ENCODE measurements at regions of chr17 and their contacts with region 1.

Region 1: DNA sequence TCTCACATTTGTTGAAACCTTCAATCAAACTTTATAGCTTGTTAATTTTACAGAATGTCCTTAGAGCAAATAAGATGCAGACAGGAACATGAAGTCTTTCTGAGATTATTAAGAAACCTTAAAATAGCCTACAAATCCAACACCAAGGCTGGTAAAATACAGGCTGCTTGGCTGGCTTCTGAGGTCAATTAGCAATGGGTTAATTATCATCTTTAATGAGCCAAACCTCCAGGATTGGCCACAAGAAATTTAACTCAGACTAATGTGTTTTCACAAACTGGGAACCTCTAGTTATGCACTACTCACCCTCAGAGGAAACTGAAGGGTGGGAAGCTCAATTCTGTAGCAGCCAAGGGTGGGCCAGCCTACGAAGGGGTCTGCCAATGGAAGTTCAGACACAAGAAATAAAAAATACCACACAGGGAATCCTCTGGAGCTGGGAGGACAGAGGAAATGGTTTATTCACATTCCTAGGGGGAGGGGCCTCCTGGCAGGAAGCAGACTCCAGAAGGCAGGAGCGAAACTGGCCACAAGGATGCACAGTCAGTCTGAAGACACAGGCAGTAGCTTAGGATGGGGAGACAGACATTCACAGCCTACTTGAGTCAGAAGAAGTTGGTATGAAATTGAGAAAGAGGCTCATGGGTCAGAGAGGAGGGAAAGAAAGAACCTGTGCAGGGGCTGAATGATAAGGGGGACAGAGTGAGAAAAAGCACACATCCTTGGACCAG is 36.1 kb downstream of the HIC1 start:
- DNase-seq: no peak
- ATAC-seq: no peak
- H3K4me3 ChIP-seq: no peak overlapping the region
- H3K4me3 Mint-ChIP-seq: peak overlapping the region; percentile 91 to 99 (median 96)
- H3K27ac ChIP-seq: peak overlapping the region; percentile 69
- H3K27ac Mint-ChIP-seq: peak overlapping the region; percentile 27 to 97 (median 95)
- H3K4me1 ChIP-seq: peaks cover 28 to 30% of the 10 kb centered on the region in 2 donors
- H3K4me1 Mint-ChIP-seq: peaks cover 28 to 76% (median 53%) of the 10 kb centered on the region in 7 donors
- H3K27me3 ChIP-seq: no peaks in the 10 kb centered on the region
- H3K27me3 Mint-ChIP-seq: no peaks in the 10 kb centered on the region

Region 2: DNA sequence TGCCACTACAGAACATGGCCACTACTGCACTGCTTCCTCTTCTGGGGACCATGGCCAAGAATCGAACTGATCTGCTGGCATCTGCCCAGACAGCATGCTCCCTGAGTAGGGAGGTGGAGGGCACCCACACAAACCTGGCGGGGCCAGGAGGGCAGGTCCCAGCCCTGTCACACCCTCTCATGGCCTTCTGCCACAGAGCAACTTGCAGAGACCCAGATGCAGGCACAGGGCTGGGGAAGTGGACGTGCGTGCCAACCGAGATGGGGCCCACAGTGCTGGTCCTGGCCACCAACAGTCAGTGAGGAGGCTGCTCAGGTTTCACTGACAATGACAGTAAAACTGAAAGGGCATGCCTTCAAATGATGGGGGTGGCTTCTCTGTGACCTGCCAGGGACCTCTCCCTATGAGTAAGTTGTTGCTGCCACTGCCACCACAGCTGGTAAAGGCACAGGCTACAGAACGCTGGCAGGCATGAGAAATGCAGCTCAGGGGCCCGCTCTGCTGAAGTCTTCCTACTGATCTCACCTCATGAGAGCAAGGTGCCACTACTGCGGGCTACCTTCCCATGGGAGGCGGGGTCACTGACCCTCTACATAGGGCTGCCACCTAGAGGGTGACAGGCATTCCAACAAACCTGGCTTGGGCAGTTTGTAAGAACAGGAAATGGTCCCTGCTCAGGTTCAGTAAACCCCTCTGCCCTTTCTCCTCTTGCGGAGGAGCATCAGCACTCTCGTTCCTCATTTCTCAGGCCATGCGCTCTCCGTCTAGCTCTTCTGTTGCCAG is 20.5 kb before region 1 on chr17:
- CTCF ChIA-PET with region 1: interaction called, 3 read pairs
- POLR2A ChIA-PET with region 1: no interaction called
- intact Hi-C with region 1: loop called in 1 of 2 experiments (anchors 1 kb)
- DNase-seq: peak in 1 of 9 donors; percentile 66
- ATAC-seq: peak; percentile 49
- H3K4me3 ChIP-seq: no peak overlapping the region
- H3K4me3 Mint-ChIP-seq: peak overlapping the region in 1 of 10 donors; percentile 53
- H3K27ac ChIP-seq: no peak overlapping the region
- H3K27ac Mint-ChIP-seq: peak overlapping the region in 1 of 9 donors; percentile 87
- H3K4me1 ChIP-seq: peaks cover 0 to 28% of the 10 kb centered on the region in 2 donors
- H3K4me1 Mint-ChIP-seq: peaks cover 0 to 76% (median 2%) of the 10 kb centered on the region in 7 donors
- H3K27me3 ChIP-seq: no peaks in the 10 kb centered on the region
- H3K27me3 Mint-ChIP-seq: peaks cover 0 to 4% (median 0%) of the 10 kb centered on the region in 5 donors

Region 3: DNA sequence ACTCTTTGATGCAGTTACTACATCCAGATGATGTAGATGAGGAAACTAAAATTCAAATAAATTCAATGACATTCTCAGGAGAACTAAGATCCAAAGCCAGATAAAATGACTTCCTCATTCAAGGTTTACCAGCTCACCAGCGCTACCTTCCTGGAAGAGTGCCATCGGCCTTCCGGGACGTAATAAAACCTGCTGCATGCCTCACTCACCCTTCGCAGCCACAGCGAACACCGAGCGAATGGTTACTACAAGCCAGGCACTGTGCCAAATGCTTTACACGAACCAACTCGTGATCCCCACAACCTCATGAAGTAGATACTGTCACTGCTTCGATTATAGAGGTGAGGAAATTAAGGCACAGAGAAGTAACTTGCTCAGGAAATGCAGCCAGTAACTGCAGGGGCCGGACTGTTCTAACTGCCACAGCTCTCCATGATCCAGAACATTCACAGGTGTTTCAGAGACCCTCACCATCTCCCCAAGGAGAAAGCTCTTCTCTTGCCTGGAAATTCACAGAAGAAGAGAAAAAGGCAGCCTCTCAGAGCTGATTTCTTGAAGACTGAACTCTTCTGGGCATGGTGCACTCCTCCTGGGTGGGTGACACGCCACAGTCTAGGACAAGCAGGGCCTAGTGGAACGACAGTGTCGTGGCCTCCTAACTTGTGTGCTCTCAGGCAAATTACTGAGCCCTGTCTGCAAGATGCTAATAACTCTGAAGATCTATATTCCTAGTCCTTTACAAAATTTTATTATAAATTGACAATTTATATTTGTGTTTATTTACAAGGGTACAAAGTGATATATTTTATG is 10.7 kb after region 1 on chr17:
- CTCF ChIA-PET with region 1: no interaction called
- POLR2A ChIA-PET with region 1: interaction called, 4 read pairs
- intact Hi-C with region 1: loop called in 1 of 2 experiments (anchors 1 kb)
- DNase-seq: peak in 7 of 9 donors; percentile 45 to 82 (median 70)
- ATAC-seq: peak; percentile 86
- H3K4me3 ChIP-seq: no peak overlapping the region
- H3K4me3 Mint-ChIP-seq: peak overlapping the region; percentile 16 to 66 (median 57)
- H3K27ac ChIP-seq: peak overlapping the region; percentile 63
- H3K27ac Mint-ChIP-seq: peak overlapping the region; percentile 24 to 91 (median 80)
- H3K4me1 ChIP-seq: peaks cover 0 to 11% of the 10 kb centered on the region in 2 donors
- H3K4me1 Mint-ChIP-seq: peaks cover 9 to 59% (median 34%) of the 10 kb centered on the region in 7 donors
- H3K27me3 ChIP-seq: no peaks in the 10 kb centered on the region
- H3K27me3 Mint-ChIP-seq: no peaks in the 10 kb centered on the region

Region 4: GRCh38 chr17:2128011-2128410 is 37.0 kb after region 1 on chr17:
- CTCF ChIA-PET with region 1: no interaction called
- POLR2A ChIA-PET with region 1: no interaction called
- intact Hi-C with region 1: no loop called
- DNase-seq: no peak
- ATAC-seq: no peak
- H3K4me3 ChIP-seq: no peak overlapping the region
- H3K4me3 Mint-ChIP-seq: no peak overlapping the region
- H3K27ac ChIP-seq: no peak overlapping the region
- H3K27ac Mint-ChIP-seq: no peak overlapping the region
- H3K4me1 ChIP-seq: peaks cover 0 to 16% of the 10 kb centered on the region in 2 donors
- H3K4me1 Mint-ChIP-seq: peaks cover 13 to 35% (median 21%) of the 10 kb centered on the region in 7 donors
- H3K27me3 ChIP-seq: no peaks in the 10 kb centered on the region
- H3K27me3 Mint-ChIP-seq: no peaks in the 10 kb centered on the region